ENCODE measurements at regions of chr10 and their contacts with region 1.

Region 1: DNA sequence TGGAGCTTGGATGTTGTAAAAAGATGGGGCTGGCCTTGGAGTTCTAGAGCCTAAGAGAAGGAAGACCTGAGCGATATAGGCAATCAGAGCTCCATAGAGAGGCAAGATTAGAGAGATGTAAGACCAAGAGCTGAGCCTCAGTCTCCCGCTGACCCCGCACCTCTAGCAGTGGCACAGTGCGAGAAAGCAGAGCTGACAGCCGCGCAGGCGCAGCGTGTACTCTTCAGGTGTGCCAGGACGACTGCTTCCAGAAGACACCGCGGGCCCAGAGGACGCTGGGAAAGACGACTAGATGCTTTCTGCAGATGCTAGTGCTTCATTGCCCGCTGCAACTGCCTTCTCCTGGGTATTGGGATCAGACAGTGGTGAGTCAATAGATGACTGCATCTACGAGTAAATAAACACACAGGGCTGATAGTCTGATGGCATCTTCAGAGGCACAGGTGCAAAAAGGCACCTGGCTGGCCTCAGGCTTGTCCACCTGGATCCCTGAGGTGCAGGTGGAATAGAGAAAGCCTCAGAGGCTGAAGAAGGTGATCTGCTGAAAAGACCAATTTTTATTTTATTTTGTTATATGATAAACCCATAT is 38.1 kb upstream of the CCDC6 start:
- DNase-seq: no peak
- H3K4me3 ChIP-seq: no peak overlapping the region
- H3K4me3 Mint-ChIP-seq: no peak overlapping the region
- H3K27ac Mint-ChIP-seq: no peak overlapping the region
- H3K4me1 ChIP-seq: peaks cover 19% of the 10 kb centered on the region
- H3K4me1 Mint-ChIP-seq: peaks cover 28% of the 10 kb centered on the region
- H3K27me3 ChIP-seq: no peaks in the 10 kb centered on the region
- H3K27me3 Mint-ChIP-seq: no peaks in the 10 kb centered on the region
- CTCF ChIP-seq: no peak

Region 2: DNA sequence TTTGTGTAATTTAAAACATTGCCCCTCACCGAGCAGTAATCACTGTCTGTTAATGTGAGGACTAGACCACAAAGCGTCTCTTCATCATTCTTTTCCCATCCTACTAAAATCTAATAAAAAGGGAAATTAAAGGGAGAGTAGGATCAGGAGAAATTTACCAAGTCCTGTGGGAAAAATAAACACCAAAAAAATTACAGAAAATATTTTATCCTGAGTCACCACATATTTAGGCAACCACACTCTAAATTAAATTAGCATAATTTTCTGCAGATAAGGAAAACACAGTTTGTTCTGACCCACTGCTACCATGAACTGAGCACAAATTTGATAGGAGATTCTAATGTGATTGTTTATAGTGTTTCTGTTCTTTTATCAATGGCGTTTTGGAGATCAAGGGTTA is 87.4 kb before region 1 on chr10:
- CTCF ChIA-PET with region 1: no interaction called
- POLR2A ChIA-PET with region 1: no interaction called
- intact Hi-C with region 1: no loop called
- DNase-seq: no peak
- H3K4me3 ChIP-seq: no peak overlapping the region
- H3K4me3 Mint-ChIP-seq: no peak overlapping the region
- H3K27ac Mint-ChIP-seq: no peak overlapping the region
- H3K4me1 ChIP-seq: peaks cover 11% of the 10 kb centered on the region
- H3K4me1 Mint-ChIP-seq: peaks cover 26% of the 10 kb centered on the region
- H3K27me3 ChIP-seq: no peaks in the 10 kb centered on the region
- H3K27me3 Mint-ChIP-seq: no peaks in the 10 kb centered on the region
- CTCF ChIP-seq: no peak

Region 3: GRCh38 chr10:59965976-59966650 is 21.7 kb after region 1 on chr10:
- CTCF ChIA-PET with region 1: no interaction called
- POLR2A ChIA-PET with region 1: no interaction called
- intact Hi-C with region 1: loop called (anchors 1 kb)
- DNase-seq: no peak
- H3K4me3 ChIP-seq: no peak overlapping the region
- H3K4me3 Mint-ChIP-seq: peak overlapping the region; percentile 5
- H3K27ac Mint-ChIP-seq: peak overlapping the region; percentile 92
- H3K4me1 ChIP-seq: peaks cover 46% of the 10 kb centered on the region
- H3K4me1 Mint-ChIP-seq: peaks cover 46% of the 10 kb centered on the region
- H3K27me3 ChIP-seq: no peaks in the 10 kb centered on the region
- H3K27me3 Mint-ChIP-seq: no peaks in the 10 kb centered on the region
- CTCF ChIP-seq: no peak

Measured in Caco-2 (cell line).